Activated B cell treated with CpG ODN at 0.5 μM for 24 hours (primary cell): ENCODE measurements at regions of chr14 and their contacts with region 1.

Region 1: DNA sequence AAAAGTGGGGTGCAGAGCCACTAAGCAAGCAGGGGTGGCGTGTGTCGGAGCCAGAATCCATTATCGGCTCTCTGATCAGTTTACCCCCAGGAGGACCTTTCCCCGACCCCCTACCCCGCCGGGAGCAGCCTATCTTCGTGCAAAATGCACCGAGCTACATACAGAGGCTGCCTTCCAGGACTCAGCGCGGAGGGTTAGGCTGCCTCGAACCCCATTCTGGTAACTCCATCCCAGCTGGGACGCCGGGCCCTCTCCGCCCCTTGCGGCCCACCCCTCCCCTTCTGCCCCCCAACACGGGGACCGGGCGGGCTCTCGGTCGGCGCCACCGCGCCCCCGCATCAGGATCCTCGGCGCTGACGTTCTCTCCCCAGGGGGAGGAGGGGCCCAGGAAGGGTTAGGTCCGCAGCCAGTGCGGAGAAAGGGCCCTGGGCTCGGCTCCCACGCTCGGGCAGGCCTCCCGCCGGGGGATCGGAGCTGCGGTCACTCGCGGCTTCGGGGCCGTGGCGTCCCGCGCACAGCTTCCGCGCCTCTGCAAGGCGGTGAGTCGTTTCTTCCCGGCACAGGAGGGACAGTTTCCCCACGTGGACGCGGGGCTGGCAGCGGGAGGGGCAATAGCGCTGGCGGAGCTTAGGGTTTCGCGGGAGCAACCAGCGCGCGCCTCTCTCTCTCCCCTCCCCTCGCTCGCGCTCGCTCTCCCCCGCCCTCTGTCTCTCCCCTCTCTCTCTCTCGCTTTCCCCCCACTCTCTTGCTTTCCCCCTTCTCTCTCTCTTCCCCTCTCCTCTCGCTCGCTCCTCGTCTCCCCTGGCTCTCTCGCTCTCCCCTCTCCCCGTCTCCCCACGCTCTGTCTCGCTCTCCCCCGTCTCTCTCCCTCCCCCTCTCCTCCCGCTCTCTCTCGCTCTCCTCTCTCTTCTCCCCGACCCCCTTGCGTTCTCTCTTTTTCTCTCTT is 12.5 kb upstream of the MAP3K9 start:
- DNase-seq: peak; percentile 36
- ATAC-seq: peak; percentile 25
- H3K4me3 Mint-ChIP-seq: peak overlapping the region; percentile 73
- H3K27ac Mint-ChIP-seq: no peak overlapping the region
- H3K4me1 Mint-ChIP-seq: peaks cover 19% of the 10 kb centered on the region
- H3K27me3 Mint-ChIP-seq: peaks cover 30% of the 10 kb centered on the region
- CTCF ChIP-seq: no peak

Region 2: GRCh38 chr14:70622111-70622712 is 199.6 kb before region 1 on chr14:
- CTCF ChIA-PET with region 1: interaction called, 29 read pairs
- POLR2A ChIA-PET with region 1: interaction called, 4 read pairs
- intact Hi-C with region 1: loop called (anchors 1 kb)
- DNase-seq: no peak
- ATAC-seq: peak; percentile 95
- H3K4me3 Mint-ChIP-seq: no peak overlapping the region
- H3K27ac Mint-ChIP-seq: no peak overlapping the region
- H3K4me1 Mint-ChIP-seq: peaks cover 19% of the 10 kb centered on the region
- H3K27me3 Mint-ChIP-seq: no peaks in the 10 kb centered on the region
- CTCF ChIP-seq: peak; percentile 74

Region 3: GRCh38 chr14:70700952-70701585 is 120.8 kb before region 1 on chr14:
- CTCF ChIA-PET with region 1: no interaction called
- POLR2A ChIA-PET with region 1: no interaction called
- intact Hi-C with region 1: no loop called
- DNase-seq: no peak
- ATAC-seq: no peak
- H3K4me3 Mint-ChIP-seq: no peak overlapping the region
- H3K27ac Mint-ChIP-seq: no peak overlapping the region
- H3K4me1 Mint-ChIP-seq: no peaks in the 10 kb centered on the region
- H3K27me3 Mint-ChIP-seq: no peaks in the 10 kb centered on the region
- CTCF ChIP-seq: no peak

Region 4: GRCh38 chr14:70780396-70781075 is 41.3 kb before region 1 on chr14:
- CTCF ChIA-PET with region 1: interaction called, 15 read pairs
- POLR2A ChIA-PET with region 1: no interaction called
- intact Hi-C with region 1: loop called (anchors 1 kb)
- DNase-seq: peak; percentile 26
- ATAC-seq: peak; percentile 93
- H3K4me3 Mint-ChIP-seq: peak overlapping the region; percentile 68
- H3K27ac Mint-ChIP-seq: peak overlapping the region; percentile 90
- H3K4me1 Mint-ChIP-seq: peaks cover 59% of the 10 kb centered on the region
- H3K27me3 Mint-ChIP-seq: no peaks in the 10 kb centered on the region
- CTCF ChIP-seq: no peak

Region 5: GRCh38 chr14:70809543-70810244 is 12.2 kb before region 1 on chr14:
- CTCF ChIA-PET with region 1: interaction called, 14 read pairs
- POLR2A ChIA-PET with region 1: interaction called, 8 read pairs
- intact Hi-C with region 1: loop called (anchors 1 kb)
- DNase-seq: peak; percentile 85
- ATAC-seq: peak; percentile 87
- H3K4me3 Mint-ChIP-seq: no peak overlapping the region
- H3K27ac Mint-ChIP-seq: peak overlapping the region; percentile 80
- H3K4me1 Mint-ChIP-seq: peaks cover 24% of the 10 kb centered on the region
- H3K27me3 Mint-ChIP-seq: no peaks in the 10 kb centered on the region
- CTCF ChIP-seq: no peak

Region 6: GRCh38 chr14:70972107-70972976 is 150.5 kb after region 1 on chr14:
- CTCF ChIA-PET with region 1: interaction called, 39 read pairs
- POLR2A ChIA-PET with region 1: interaction called, 4 read pairs
- intact Hi-C with region 1: loop called (anchors 1 kb)
- DNase-seq: peak; percentile 49
- ATAC-seq: peak; percentile 62
- H3K4me3 Mint-ChIP-seq: no peak overlapping the region
- H3K27ac Mint-ChIP-seq: no peak overlapping the region
- H3K4me1 Mint-ChIP-seq: peaks cover 5% of the 10 kb centered on the region
- H3K27me3 Mint-ChIP-seq: no peaks in the 10 kb centered on the region
- CTCF ChIP-seq: peak; percentile 59